Activated naive CD4-positive, alpha-beta T cell treated with anti-CD3 and anti-CD28 coated beads for 36 hours (primary cell): ENCODE measurements at regions of chr1 and their contacts with region 1.

Region 1: GRCh38 chr1:75785983-75786853 is at the start of gene RABGGTB:
- DNase-seq: peak; percentile 96
- H3K4me3 Mint-ChIP-seq: peak within 1 kb of the TSS; percentile 99
- H3K27ac Mint-ChIP-seq: peak within 1 kb of the TSS; percentile 99
- H3K4me1 Mint-ChIP-seq: peaks cover 24% of the 10 kb centered on the region
- H3K27me3 Mint-ChIP-seq: no peaks in the 10 kb centered on the region
- total RNA-seq, gene RABGGTB: 158 to 162 TPM

Region 2: DNA sequence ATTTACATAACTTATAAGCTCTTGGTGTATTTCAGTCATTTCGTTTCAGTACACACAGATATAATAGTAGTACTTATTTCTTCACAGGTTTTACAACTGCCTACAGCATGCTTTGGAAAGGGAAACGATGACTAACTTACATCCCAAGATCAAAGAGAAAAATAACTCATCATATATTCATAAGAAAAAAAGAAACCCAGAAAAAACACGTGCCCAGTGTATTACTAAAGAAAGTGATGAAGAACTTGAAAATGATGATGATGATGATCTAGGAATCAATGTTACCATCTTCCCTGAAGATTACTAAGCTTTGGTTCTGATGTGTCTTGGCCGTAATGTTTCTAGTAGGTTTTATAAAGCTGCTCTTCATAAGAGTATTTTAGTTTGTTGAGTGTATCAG is 1022.4 kb before region 1 on chr1:
- CTCF ChIA-PET with region 1: no interaction called
- intact Hi-C with region 1: loop called (anchors 5 kb)
- DNase-seq: no peak
- H3K4me3 Mint-ChIP-seq: no peak overlapping the region
- H3K27ac Mint-ChIP-seq: peak overlapping the region; percentile 47
- H3K4me1 Mint-ChIP-seq: peaks cover 18% of the 10 kb centered on the region
- H3K27me3 Mint-ChIP-seq: no peaks in the 10 kb centered on the region

Region 3: DNA sequence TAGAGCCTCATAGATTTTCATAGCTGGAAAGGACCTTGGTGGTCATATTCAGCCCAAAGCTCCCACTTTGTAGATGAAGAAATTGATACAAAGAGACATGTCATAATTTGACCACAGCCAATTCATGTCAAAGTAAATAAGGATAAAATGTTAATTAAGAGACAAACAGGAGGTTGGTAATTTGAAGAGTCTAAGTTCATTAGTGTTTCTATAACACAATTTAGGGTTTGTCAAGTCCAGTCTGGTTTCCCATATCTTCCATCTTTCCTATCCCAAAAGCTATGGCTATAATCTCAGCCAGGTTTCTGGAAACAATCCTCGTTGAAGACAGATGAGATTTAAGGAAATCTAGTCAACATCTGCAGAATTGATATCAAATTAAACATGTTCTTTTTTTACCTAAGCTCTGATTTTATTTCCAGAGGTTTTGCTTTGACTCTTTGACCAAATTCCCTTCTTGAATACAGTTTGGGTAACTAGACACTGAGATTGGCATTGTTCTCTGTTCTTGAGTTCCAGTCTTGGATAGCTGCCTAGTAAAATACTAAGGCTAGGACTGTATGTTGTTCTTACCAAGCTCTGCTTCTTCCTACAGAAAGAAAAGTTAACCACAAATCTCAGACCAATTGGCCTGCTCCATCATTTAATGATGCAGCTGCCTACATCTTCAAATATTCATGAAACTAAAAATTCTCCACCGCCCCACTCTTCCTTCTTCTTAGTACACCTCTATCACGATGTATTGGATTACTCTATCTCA is 237.3 kb before region 1 on chr1:
- CTCF ChIA-PET with region 1: no interaction called
- intact Hi-C with region 1: no loop called
- DNase-seq: no peak
- H3K4me3 Mint-ChIP-seq: no peak overlapping the region
- H3K27ac Mint-ChIP-seq: no peak overlapping the region
- H3K4me1 Mint-ChIP-seq: no peaks in the 10 kb centered on the region
- H3K27me3 Mint-ChIP-seq: peaks cover 12% of the 10 kb centered on the region

Region 4: GRCh38 chr1:75724472-75725022 is 61.7 kb before region 1 on chr1 and contains the start of gene ACADM:
- CTCF ChIA-PET with region 1: no interaction called
- intact Hi-C with region 1: loop called (anchors 1 kb)
- DNase-seq: peak; percentile 86
- H3K4me3 Mint-ChIP-seq: peak within 1 kb of the TSS; percentile 100
- H3K27ac Mint-ChIP-seq: peak within 1 kb of the TSS; percentile 97
- H3K4me1 Mint-ChIP-seq: peaks cover 37% of the 10 kb centered on the region
- H3K27me3 Mint-ChIP-seq: no peaks in the 10 kb centered on the region
- total RNA-seq, gene ACADM: 37.1 to 38.5 TPM

Region 5: DNA sequence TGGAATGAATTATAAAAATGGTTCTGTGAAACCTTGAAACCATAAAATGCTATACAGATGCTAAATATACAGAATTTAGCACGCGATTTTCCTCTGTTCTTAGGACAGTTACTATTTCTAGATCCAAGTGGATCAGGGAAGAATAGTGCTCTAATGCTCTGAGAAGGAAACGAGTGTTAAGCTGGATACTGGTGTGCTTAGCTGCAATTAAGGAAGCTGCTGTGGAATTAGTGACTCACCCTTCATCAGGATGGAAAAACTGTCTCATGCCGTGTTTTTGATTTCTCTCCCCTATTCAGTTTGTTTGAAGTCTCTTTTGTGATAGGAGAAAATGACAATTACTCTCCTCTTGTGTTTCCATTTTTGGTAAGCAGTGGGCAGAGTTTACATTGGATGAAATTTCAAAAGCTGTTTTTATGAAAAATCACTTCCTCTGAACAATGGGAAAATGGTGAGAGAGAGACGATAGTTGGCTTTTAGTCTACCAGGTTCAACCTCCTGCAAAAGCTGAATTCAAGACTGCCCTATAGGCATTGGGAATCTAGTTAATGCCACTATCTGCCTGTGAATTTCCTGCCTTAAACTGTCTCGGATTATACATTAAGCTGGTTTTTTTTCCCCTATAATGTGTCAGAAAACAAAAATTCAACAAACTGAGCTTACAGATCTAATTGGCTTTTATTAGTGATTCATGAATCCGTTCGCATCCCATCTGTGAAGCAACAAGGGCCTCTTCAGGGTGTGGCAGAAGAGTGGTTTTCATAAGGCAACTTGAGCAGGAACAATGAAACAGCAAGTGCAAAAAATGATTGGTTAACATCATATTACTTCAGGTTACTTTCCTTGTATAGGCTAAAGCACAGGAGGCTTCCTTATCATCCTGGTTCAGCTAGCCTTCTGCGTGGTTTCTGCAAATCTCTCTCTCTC is 468.1 kb after region 1 on chr1:
- CTCF ChIA-PET with region 1: no interaction called
- intact Hi-C with region 1: loop called (anchors 10 kb)
- DNase-seq: peak; percentile 56
- H3K4me3 Mint-ChIP-seq: no peak overlapping the region
- H3K27ac Mint-ChIP-seq: peak overlapping the region; percentile 65
- H3K4me1 Mint-ChIP-seq: peaks cover 68% of the 10 kb centered on the region
- H3K27me3 Mint-ChIP-seq: no peaks in the 10 kb centered on the region

Region 6: DNA sequence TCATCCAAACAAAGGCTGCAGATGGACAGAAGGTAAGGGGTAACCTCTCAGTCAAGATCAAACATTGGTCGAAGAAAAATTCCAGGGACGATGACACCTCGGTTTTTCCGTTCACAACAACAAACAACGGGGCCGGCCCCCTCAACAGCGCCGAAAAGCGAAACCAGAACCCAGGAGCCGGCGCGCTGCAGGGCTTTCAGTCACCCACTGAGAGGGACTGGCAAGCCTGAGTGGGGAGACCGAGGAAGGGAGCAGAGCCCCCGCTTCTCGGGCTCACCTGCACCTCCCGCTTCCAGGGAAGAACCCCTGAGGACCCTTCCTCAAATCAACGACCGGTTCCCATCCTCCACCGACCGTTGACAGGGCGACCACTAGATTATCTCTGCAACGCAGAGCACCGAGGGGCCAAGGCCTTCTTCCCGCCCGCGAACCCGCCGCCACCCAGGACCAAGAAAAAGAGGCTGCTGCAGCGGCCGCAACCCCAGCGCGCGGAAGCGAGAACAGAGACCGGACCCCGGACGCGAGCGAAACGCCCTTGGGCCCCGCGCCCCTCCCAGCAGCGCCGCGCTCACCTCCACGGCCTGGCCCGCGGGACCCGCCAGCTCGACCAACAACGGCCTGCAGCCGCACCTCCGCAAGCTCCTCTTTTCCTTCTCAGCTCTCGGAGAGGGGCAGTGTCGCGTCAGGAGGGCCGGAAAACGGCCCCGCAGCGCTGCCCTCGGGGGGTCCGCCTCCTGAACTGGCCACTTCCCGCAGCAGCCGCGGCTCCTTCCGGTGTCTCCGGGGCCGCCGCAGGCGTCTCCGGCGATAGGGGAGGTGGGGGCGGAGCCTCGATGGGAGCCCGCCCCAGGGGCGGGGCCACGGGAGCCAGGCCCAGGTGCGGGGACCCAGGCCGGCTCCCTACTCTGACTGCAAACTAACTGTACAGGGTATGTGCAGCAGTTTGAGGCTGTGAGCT is 1973.1 kb after region 1 on chr1 and contains the start of gene USP33:
- CTCF ChIA-PET with region 1: no interaction called
- intact Hi-C with region 1: loop called (anchors 10 kb)
- DNase-seq: peak; percentile 93
- H3K4me3 Mint-ChIP-seq: peak within 1 kb of the TSS; percentile 90
- H3K27ac Mint-ChIP-seq: peak within 1 kb of the TSS; percentile 93
- H3K4me1 Mint-ChIP-seq: peaks cover 46% of the 10 kb centered on the region
- H3K27me3 Mint-ChIP-seq: no peaks in the 10 kb centered on the region
- total RNA-seq, gene USP33: 32.6 to 35.6 TPM